CD8-positive, alpha-beta T cell (primary cell): ENCODE measurements at regions of chr2 and their contacts with region 1.

Region 1: DNA sequence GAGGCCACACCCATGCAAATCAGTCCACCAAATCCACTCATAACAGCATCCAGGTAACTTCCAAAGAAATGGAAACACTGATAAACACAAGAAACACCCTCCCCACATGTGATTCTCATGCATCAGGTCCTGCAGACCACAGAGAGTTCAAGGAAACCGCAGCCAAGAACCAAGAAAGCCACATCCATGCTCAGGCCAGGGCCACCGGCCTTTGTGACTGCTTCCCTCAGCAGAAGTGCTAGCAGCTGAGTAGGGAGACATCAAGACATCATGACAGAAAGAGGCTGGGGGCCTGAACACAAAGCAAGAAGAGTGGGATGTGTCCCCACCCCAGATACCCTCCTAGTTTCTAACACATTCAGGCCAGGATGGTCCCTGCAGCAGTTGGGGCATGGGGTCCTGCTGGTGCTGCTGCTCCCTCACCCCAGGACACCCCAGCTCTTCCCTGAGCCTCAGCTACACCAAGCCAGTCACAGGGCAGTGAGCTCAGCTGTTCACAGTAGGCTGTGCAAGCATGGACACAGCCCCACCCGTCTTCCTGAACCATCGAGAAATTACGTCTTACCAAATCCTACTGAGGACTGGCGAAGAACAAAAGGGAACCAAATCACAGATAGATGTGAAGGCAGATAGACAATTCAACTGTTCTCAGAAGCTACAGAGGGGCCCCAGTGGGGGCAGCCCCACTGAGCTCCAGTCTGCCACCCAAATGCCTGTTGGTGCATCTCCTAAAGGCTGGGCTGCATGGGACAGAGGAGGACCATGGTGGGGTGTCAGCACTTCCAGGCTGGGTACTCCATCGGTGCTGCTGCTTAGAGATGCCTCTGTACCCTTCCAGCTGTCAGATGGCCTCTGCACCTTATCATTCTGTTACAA is 60.9 kb downstream of the HDAC4 start:
- DNase-seq: peak in 2 of 9 experiments; percentile 42
- ATAC-seq: peak; percentile 56
- H3K4me3 ChIP-seq: no peak overlapping the region
- H3K4me3 Mint-ChIP-seq: peak overlapping the region; percentile 4
- H3K27ac ChIP-seq: no peak overlapping the region
- H3K27ac Mint-ChIP-seq: peak overlapping the region; percentile 53
- H3K4me1 ChIP-seq: peaks cover 18% of the 10 kb centered on the region
- H3K4me1 Mint-ChIP-seq: peaks cover 29% of the 10 kb centered on the region
- H3K27me3 ChIP-seq: no peaks in the 10 kb centered on the region
- H3K27me3 Mint-ChIP-seq: no peaks in the 10 kb centered on the region
- CTCF ChIP-seq: no peak

Region 2: DNA sequence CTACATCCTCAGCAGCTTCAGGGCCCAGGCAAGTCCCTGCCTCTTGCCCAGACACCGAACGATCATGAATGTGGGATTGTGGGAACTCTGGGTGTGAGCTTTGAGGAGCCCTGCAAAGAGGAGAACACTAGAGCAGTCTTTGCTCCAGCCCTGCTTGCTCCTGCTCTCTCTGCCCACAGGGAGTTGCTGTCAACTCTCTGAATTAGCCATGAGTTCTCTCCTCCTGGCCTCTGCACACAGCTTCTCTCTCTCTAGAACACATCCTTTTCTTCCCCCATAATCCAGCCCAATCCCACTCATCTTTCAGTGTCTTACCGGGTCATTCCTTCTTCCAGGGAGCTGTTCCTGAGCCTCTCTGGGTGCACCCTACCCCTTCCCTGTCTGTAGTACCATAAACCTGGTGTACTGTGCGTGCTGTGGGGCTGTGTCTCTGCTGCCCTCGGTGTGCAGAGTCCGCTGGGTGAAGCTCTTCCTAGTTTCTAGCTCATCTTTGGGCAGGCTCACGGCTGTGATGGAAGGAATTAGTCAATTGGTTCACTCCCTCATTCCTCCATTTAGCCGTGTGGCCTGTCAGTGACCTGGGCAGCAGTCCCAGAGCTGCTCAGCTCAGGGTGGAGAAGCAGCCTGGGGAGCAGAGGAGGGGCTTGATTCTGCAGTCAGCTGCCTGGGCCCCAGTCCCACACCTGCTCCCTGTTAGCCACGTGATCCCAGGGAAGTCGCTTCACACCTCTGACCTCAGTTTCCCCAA is 193.8 kb after region 1 on chr2:
- CTCF ChIA-PET with region 1: no interaction called
- POLR2A ChIA-PET with region 1: no interaction called
- intact Hi-C with region 1: no loop called
- DNase-seq: no peak
- ATAC-seq: no peak
- H3K4me3 ChIP-seq: no peak overlapping the region
- H3K4me3 Mint-ChIP-seq: no peak overlapping the region
- H3K27ac ChIP-seq: no peak overlapping the region
- H3K27ac Mint-ChIP-seq: no peak overlapping the region
- H3K4me1 ChIP-seq: no peaks in the 10 kb centered on the region
- H3K4me1 Mint-ChIP-seq: no peaks in the 10 kb centered on the region
- H3K27me3 ChIP-seq: no peaks in the 10 kb centered on the region
- H3K27me3 Mint-ChIP-seq: peaks cover 5% of the 10 kb centered on the region
- CTCF ChIP-seq: no peak

Region 3: GRCh38 chr2:240225660-240226475 is 885.9 kb after region 1 on chr2:
- CTCF ChIA-PET with region 1: no interaction called
- POLR2A ChIA-PET with region 1: no interaction called
- intact Hi-C with region 1: loop called in 1 of 2 experiments (anchors 10 kb)
- DNase-seq: no peak
- ATAC-seq: no peak
- H3K4me3 ChIP-seq: no peak overlapping the region
- H3K4me3 Mint-ChIP-seq: no peak overlapping the region
- H3K27ac ChIP-seq: no peak overlapping the region
- H3K27ac Mint-ChIP-seq: no peak overlapping the region
- H3K4me1 ChIP-seq: no peaks in the 10 kb centered on the region
- H3K4me1 Mint-ChIP-seq: no peaks in the 10 kb centered on the region
- H3K27me3 ChIP-seq: peaks cover 2 to 3% of the 10 kb centered on the region in 2 experiments
- H3K27me3 Mint-ChIP-seq: peaks cover 56% of the 10 kb centered on the region
- CTCF ChIP-seq: no peak